Endothelial cell of umbilical vein (primary cell): ENCODE measurements at regions of chr21 and their contacts with region 1.

Region 1: DNA sequence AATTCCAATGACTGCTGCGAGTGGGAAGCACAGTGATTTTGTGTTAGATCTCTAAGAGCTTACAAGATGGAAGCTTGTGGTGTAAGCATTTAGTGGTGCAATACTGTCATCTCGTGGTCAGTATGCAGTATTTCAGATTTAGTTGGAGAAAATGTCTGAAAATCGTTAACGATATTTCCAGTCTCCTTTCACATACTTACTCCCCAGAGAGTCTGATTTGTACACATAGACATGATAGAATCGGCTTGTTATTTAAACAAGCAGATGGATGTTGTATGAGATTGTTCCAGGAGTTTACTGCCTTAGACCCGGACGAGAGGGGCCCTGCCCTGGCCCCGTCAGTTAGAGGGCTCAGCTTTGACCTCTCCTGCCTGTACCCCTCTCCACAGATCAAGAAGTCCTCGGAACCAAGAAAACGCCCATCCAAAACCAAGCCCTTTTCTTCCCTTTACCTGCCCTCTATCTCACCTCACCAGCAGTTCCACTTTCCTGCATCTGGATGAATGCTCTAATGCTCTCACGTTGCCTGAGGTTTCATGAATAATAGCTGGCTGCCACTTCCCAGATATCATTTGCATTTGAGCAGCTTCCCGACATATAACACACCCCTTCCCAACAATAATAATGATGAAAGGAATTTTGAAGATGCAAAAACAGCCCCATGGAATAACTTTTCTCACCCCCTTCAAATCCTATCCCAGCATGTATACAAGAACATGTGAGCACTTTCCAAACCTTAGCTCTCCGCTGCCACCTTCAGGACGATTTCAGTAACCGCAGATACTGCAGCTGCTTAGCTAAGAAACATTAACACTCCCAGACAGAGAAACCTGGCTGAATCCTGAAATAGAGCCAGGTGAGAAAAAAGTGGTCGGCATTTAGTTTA is 247.3 kb downstream of the LTN1 start:
- DNase-seq: peak; percentile 85
- H3K4me3 ChIP-seq: peak overlapping the region; percentile 38 to 75 (median 51)
- H3K27ac ChIP-seq: peak overlapping the region; percentile 68
- H3K4me1 ChIP-seq: peaks cover 7% of the 10 kb centered on the region
- H3K27me3 ChIP-seq: no peaks in the 10 kb centered on the region
- CTCF ChIP-seq: peak; percentile 77 to 78
- POLR2A ChIP-seq: no peak

Region 2: GRCh38 chr21:26842976-26843932 is 1902.1 kb before region 1 on chr21:
- CTCF ChIA-PET with region 1: interaction called, 67 read pairs
- POLR2A ChIA-PET with region 1: interaction called, 4 read pairs
- dilution Hi-C with region 1: no loop called
- intact Hi-C with region 1: no loop called
- DNase-seq: peak; percentile 94
- H3K4me3 ChIP-seq: peak overlapping the region; percentile 38 to 77 (median 64)
- H3K27ac ChIP-seq: peak overlapping the region; percentile 80
- H3K4me1 ChIP-seq: peaks cover 35% of the 10 kb centered on the region
- H3K27me3 ChIP-seq: peaks cover 5 to 16% of the 10 kb centered on the region in 2 experiments
- CTCF ChIP-seq: peak; percentile 12 to 34
- POLR2A ChIP-seq: no peak

Region 3: DNA sequence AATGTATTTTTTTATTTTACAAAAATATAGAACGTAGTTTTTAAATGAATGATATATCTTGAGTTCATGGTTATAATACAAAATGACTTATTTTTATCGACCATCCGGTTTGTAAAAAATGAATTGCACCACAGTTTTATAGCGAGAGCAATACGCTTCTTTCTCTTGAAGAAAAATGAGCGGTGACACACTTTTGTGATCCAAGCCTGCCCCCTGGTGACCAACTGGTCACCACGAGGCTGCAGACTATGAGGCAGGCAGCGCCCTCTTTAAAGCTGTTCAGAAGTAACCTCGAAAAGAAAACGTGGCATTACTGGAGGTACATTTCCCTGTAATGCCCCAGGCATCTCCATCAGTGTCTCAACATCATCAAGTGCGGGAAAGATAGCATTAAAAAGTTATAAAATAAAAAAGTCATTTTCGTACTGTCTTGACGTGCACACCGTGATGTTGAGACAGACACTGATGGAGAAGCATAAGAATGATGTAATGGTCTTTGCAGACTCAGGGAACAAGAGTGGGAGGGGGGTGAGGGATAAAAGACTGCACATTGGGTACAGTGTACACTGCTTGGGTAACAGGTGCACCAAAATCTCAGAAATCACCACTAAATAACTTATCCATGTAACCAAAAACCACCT is 1044.3 kb before region 1 on chr21:
- CTCF ChIA-PET with region 1: interaction called, 169 read pairs
- POLR2A ChIA-PET with region 1: no interaction called
- dilution Hi-C with region 1: no loop called
- intact Hi-C with region 1: loop called (anchors 1 kb)
- DNase-seq: peak; percentile 81
- H3K4me3 ChIP-seq: no peak overlapping the region
- H3K27ac ChIP-seq: no peak overlapping the region
- H3K4me1 ChIP-seq: no peaks in the 10 kb centered on the region
- H3K27me3 ChIP-seq: no peaks in the 10 kb centered on the region
- CTCF ChIP-seq: peak; percentile 78 to 82
- POLR2A ChIP-seq: no peak

Region 4: GRCh38 chr21:28336314-28336713 is 409.1 kb before region 1 on chr21:
- CTCF ChIA-PET with region 1: interaction called, 204 read pairs
- POLR2A ChIA-PET with region 1: interaction called, 5 read pairs
- dilution Hi-C with region 1: no loop called
- intact Hi-C with region 1: loop called (anchors 1 kb)
- DNase-seq: peak; percentile 78
- H3K4me3 ChIP-seq: no peak overlapping the region
- H3K27ac ChIP-seq: no peak overlapping the region
- H3K4me1 ChIP-seq: peaks cover 20% of the 10 kb centered on the region
- H3K27me3 ChIP-seq: no peaks in the 10 kb centered on the region
- CTCF ChIP-seq: peak; percentile 16 to 25
- POLR2A ChIP-seq: no peak

Region 5: GRCh38 chr21:28522014-28522799 is 223.2 kb before region 1 on chr21:
- CTCF ChIA-PET with region 1: interaction called, 75 read pairs
- POLR2A ChIA-PET with region 1: no interaction called
- dilution Hi-C with region 1: no loop called
- intact Hi-C with region 1: loop called (anchors 1 kb)
- DNase-seq: peak; percentile 88
- H3K4me3 ChIP-seq: no peak overlapping the region
- H3K27ac ChIP-seq: peak overlapping the region; percentile 72
- H3K4me1 ChIP-seq: peaks cover 45% of the 10 kb centered on the region
- H3K27me3 ChIP-seq: no peaks in the 10 kb centered on the region
- CTCF ChIP-seq: peak; percentile 44 to 56
- POLR2A ChIP-seq: no peak

Region 6: GRCh38 chr21:28781602-28782276 is 36.4 kb after region 1 on chr21:
- CTCF ChIA-PET with region 1: interaction called, 11 read pairs
- POLR2A ChIA-PET with region 1: no interaction called
- dilution Hi-C with region 1: no loop called
- intact Hi-C with region 1: no loop called
- DNase-seq: peak; percentile 29
- H3K4me3 ChIP-seq: no peak overlapping the region
- H3K27ac ChIP-seq: no peak overlapping the region
- H3K4me1 ChIP-seq: no peaks in the 10 kb centered on the region
- H3K27me3 ChIP-seq: no peaks in the 10 kb centered on the region
- CTCF ChIP-seq: peak; percentile 54 to 59
- POLR2A ChIP-seq: no peak